Dorsolateral prefrontal cortex (tissue), 120 donors: ENCODE measurements at regions of chr9 and their contacts with region 1.

Region 1: GRCh38 chr9:110650991-110651411 is 17.6 kb upstream of the MUSK start:
- DNase-seq: no peak
- H3K4me3 ChIP-seq: peak overlapping the region in 23 of 59 donors; percentile 3 to 51 (median 20)
- H3K27ac ChIP-seq: peak overlapping the region in 58 of 59 donors; percentile 74 to 98 (median 91)
- H3K27me3 ChIP-seq: no peaks in the 10 kb centered on the region
- CTCF ChIP-seq: no peak

Region 2: DNA sequence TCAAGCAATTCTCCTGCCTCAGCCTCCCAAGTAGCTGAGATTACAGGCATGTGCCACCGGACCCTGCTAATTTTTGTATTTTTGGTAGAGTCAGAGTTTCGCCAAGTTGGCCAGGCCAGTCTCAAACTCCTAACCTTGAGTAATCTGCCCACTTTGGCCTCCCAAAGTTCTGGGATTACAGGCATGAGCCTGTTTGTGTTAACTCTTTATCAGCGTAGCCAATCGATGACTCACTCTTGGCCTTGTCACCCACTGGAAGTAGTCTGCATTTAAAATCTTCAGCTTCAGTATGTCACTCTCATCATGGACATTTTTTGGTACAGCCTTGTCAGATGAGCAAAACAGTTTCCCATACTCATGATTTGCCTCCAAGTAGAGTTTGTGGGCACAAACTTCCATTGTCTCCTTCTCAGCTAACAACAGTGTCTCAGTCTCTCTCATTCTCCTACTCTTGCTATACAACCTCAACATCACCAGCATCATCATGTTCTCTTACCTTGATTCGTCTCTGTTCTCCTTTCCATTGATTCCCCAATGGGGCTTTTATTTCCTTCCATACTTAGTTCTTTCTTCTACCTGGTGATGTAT is 40.1 kb after region 1 on chr9:
- intact Hi-C with region 1: loop called in 1 of 2 experiments (anchors 5 kb)
- DNase-seq: no peak
- H3K4me3 ChIP-seq: no peak overlapping the region
- H3K27ac ChIP-seq: peak overlapping the region in 2 of 59 donors; percentile 16 to 41
- H3K27me3 ChIP-seq: no peaks in the 10 kb centered on the region
- CTCF ChIP-seq: no peak

Region 3: DNA sequence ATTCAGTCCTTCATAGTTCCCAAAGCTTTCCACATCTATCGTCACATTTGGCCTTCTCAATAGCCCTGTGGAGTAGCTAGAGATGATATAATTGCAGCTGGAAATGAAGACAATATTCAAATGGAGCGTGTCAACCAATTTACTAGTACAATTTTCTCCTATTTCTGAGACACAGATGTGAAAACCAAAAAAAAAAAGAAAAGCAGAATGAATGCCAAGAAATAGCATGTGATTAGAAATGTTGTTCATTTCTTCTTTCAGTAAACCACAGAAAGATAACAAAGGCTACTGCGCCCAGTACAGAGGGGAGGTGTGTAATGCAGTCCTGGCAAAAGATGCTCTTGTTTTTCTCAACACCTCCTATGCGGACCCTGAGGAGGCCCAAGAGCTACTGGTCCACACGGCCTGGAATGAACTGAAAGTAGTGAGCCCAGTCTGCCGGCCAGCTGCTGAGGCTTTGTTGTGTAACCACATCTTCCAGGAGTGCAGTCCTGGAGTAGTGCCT is 116.6 kb after region 1 on chr9:
- intact Hi-C with region 1: loop called (anchors 2 to 5 kb)
- DNase-seq: peak in 6 of 10 donors; percentile 31 to 54 (median 40)
- H3K4me3 ChIP-seq: peak overlapping the region in 25 of 59 donors; percentile 0 to 45 (median 22)
- H3K27ac ChIP-seq: peak overlapping the region; percentile 28 to 96 (median 89)
- H3K27me3 ChIP-seq: no peaks in the 10 kb centered on the region
- CTCF ChIP-seq: peak in 4 of 56 donors; percentile 3 to 11 (median 8)

Region 4: GRCh38 chr9:110954822-110955291 is 303.9 kb after region 1 on chr9:
- intact Hi-C with region 1: loop called in 1 of 2 experiments (anchors 10 kb)
- DNase-seq: no peak
- H3K4me3 ChIP-seq: no peak overlapping the region
- H3K27ac ChIP-seq: peak overlapping the region in 1 of 59 donors; percentile 3
- H3K27me3 ChIP-seq: no peaks in the 10 kb centered on the region
- CTCF ChIP-seq: no peak